ENCODE measurements at regions of chr6 and their contacts with region 1.

Region 1: GRCh38 chr6:3356056-3356761 is 97.5 kb downstream of the PSMG4 start:
- DNase-seq: peak; percentile 70
- ATAC-seq: peak; percentile 97
- H3K4me3 Mint-ChIP-seq: peak overlapping the region; percentile 90
- H3K27ac Mint-ChIP-seq: peak overlapping the region; percentile 95
- H3K4me1 Mint-ChIP-seq: peaks cover 36% of the 10 kb centered on the region
- H3K27me3 Mint-ChIP-seq: no peaks in the 10 kb centered on the region
- CTCF ChIP-seq: no peak

Region 2: GRCh38 chr6:1884313-1884712 is 1471.9 kb before region 1 on chr6:
- CTCF ChIA-PET with region 1: no interaction called
- POLR2A ChIA-PET with region 1: no interaction called
- intact Hi-C with region 1: no loop called
- DNase-seq: no peak
- ATAC-seq: no peak
- H3K4me3 Mint-ChIP-seq: no peak overlapping the region
- H3K27ac Mint-ChIP-seq: no peak overlapping the region
- H3K4me1 Mint-ChIP-seq: no peaks in the 10 kb centered on the region
- H3K27me3 Mint-ChIP-seq: no peaks in the 10 kb centered on the region
- CTCF ChIP-seq: no peak

Region 3: DNA sequence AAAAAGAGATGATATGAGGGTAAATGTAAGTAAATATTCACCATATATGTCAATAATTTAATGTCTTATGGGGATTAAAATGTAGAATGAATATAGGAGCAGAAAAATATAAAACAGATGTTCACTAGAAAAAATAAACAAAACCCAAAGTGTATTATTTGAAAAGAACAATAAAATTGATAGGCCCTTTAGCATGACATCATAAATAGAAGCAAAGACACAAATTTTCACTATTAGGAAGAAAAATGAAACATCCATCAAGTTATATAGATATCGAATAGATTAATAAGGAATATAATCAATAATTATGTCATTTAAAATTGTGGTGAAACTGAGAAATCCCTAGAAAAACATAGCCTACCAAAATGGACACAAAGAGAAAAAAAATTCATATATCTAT is 1070.7 kb before region 1 on chr6:
- CTCF ChIA-PET with region 1: no interaction called
- POLR2A ChIA-PET with region 1: no interaction called
- intact Hi-C with region 1: no loop called
- DNase-seq: no peak
- ATAC-seq: no peak
- H3K4me3 Mint-ChIP-seq: no peak overlapping the region
- H3K27ac Mint-ChIP-seq: no peak overlapping the region
- H3K4me1 Mint-ChIP-seq: no peaks in the 10 kb centered on the region
- H3K27me3 Mint-ChIP-seq: no peaks in the 10 kb centered on the region
- CTCF ChIP-seq: no peak

Region 4: GRCh38 chr6:3118353-3119039 is 237.7 kb before region 1 on chr6 and contains the start of gene BPHL:
- CTCF ChIA-PET with region 1: no interaction called
- POLR2A ChIA-PET with region 1: no interaction called
- intact Hi-C with region 1: loop called (anchors 5 kb)
- DNase-seq: peak; percentile 100
- ATAC-seq: peak; percentile 92
- H3K4me3 Mint-ChIP-seq: peak within 1 kb of the TSS; percentile 89
- H3K27ac Mint-ChIP-seq: peak within 1 kb of the TSS; percentile 93
- H3K4me1 Mint-ChIP-seq: peaks cover 16% of the 10 kb centered on the region
- H3K27me3 Mint-ChIP-seq: no peaks in the 10 kb centered on the region
- CTCF ChIP-seq: no peak
- total RNA-seq, gene BPHL: 10.5 and 11.0 TPM in 2 replicates

Region 5: DNA sequence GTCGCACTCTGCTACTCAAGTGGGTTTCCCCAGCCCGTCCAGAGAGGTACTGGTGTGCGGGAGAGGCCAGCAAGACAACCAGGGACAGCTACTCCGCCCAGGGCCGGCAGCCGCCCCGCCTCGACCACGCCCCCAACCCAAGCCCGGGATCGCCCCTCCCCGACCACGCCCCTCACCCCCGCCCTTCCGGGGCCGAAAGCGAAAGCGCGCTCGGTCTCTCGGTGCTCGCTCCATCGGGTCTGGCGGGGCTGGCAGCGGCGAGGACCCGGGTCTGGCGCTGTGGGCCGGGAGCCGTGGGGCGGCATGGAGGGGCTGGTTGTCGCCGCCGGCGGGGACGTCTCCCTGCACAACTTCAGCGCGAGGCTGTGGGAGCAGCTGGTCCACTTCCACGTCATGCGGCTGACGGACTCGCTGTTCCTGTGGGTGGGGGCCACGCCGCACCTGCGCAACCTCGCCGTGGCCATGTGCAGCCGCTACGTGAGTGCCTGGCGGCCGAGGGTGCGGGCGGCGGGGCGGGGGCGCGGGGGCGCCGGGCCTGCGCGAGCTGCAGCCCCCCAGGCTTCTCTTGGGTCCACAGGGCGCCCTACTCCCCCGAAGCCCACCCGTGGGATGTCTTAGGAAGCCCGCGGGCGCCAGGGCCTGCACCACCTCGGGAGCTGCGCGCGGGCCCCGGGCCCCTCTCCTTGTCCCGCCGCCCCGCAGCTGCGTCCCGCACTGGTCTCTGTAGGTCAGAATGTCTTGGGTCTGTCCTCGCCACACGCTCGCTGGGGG is 97.3 kb before region 1 on chr6 and contains the start of gene PSMG4:
- CTCF ChIA-PET with region 1: no interaction called
- POLR2A ChIA-PET with region 1: no interaction called
- intact Hi-C with region 1: loop called (anchors 1 kb)
- DNase-seq: peak; percentile 96
- ATAC-seq: peak; percentile 90
- H3K4me3 Mint-ChIP-seq: peak within 1 kb of the TSS; percentile 98
- H3K27ac Mint-ChIP-seq: peak within 1 kb of the TSS; percentile 88
- H3K4me1 Mint-ChIP-seq: peaks cover 40% of the 10 kb centered on the region
- H3K27me3 Mint-ChIP-seq: peaks cover 6% of the 10 kb centered on the region
- CTCF ChIP-seq: no peak
- total RNA-seq, gene PSMG4: 28.7 and 29.9 TPM in 2 replicates

Region 6: GRCh38 chr6:3456755-3457466 is 100.7 kb after region 1 on chr6 and contains the start of gene SLC22A23:
- CTCF ChIA-PET with region 1: no interaction called
- POLR2A ChIA-PET with region 1: no interaction called
- intact Hi-C with region 1: loop called (anchors 2 kb)
- DNase-seq: peak; percentile 67
- ATAC-seq: peak; percentile 73
- H3K4me3 Mint-ChIP-seq: peak within 1 kb of the TSS; percentile 68
- H3K27ac Mint-ChIP-seq: peak within 1 kb of the TSS; percentile 4
- H3K4me1 Mint-ChIP-seq: peaks cover 5% of the 10 kb centered on the region
- H3K27me3 Mint-ChIP-seq: peaks cover 25% of the 10 kb centered on the region
- CTCF ChIP-seq: no peak
- total RNA-seq, gene SLC22A23: 0.24 and 0.95 TPM in 2 replicates

Region 7: DNA sequence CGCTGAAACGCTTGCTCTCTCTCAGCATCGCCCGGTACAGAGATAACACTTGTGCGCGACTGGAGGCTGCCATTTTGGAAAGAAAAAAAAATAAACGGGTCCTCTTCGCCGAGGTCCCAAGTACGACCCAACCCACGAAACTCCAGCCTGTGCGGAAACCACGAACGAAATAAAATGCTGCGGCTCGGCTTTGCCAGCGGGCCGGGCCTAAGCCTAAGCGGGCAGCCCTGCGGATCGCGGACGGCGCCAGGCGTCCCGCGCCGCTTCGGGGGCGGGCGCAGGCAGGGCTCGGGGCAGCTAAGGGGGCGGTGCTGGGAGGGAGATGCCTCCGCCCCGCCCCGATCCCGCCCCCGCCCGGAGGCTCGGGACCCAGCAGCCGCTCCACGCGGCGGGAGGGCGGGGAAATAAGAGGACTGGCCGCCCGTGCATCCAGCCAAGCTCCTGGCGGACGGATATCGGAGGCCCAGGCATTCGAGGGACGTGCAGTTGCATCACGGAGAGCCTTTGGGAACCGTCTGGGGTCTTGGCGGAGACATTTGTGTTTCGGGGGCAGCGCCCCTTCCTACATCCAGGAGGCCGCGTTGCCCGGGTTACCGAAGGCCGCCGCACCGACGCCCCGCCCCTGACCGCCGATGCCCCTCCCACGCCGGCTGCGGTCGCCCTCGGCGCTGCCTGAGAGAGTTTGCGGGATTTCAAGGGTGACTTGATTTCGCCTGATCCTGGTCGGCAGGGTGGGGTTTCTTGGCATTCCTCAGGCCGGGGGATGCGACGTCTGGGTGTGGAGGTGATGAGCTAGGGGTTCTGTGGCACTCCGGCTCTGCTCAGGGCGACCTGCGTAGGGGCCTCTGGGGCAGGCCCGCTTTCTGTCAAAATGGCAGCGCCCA is 1904.7 kb after region 1 on chr6 and contains the starts of genes FARS2 and LYRM4:
- CTCF ChIA-PET with region 1: no interaction called
- POLR2A ChIA-PET with region 1: no interaction called
- intact Hi-C with region 1: loop called (anchors 2 kb)
- DNase-seq: peak; percentile 97
- ATAC-seq: peak; percentile 84
- H3K4me3 Mint-ChIP-seq: peak within 1 kb of the TSS; percentile 98
- H3K27ac Mint-ChIP-seq: peak within 1 kb of the TSS; percentile 100
- H3K4me1 Mint-ChIP-seq: peaks cover 27% of the 10 kb centered on the region
- H3K27me3 Mint-ChIP-seq: no peaks in the 10 kb centered on the region
- CTCF ChIP-seq: no peak
- total RNA-seq, gene FARS2: 28.2 and 32.7 TPM in 2 replicates
- total RNA-seq, gene LYRM4: 51.2 and 52.2 TPM in 2 replicates

Measured in activated B cell treated with CpG ODN at 0.5 μM for 24 hours (primary cell).